CD8-positive, alpha-beta T cell (primary cell): ENCODE measurements at regions of chr3 and their contacts with region 1.

Region 1: DNA sequence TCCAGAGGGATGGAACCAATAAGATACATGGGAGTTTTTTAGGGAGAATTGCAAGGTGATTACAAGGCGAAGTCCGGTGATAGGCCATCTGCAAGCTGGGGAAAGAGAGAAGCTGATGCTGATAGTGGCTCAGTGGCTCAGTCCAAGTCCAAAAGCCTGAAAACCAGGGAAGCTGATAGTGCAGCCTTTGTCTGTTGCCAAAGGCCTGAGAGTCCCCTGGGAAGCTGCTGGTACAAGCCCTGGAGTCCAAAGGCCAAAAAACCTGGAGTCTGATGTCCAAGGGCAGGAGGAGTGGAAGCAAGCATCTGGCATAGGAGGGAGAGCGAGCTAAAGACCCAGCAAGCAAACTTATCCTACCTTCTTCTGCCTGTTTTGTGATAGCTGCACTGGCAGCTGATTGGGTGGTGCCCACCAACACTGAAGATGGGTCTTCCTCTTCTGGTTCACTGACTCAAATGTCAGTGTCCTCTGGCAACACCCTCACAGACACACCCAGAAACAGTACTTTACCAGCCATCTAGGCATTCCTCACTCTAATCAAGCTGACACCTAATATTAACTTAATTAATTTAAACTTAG is 16.7 kb downstream of the TFG start:
- DNase-seq: no peak
- ATAC-seq: no peak
- H3K4me3 ChIP-seq: no peak overlapping the region
- H3K4me3 Mint-ChIP-seq: no peak overlapping the region
- H3K27ac ChIP-seq: no peak overlapping the region
- H3K27ac Mint-ChIP-seq: no peak overlapping the region
- H3K4me1 ChIP-seq: no peaks in the 10 kb centered on the region
- H3K4me1 Mint-ChIP-seq: peaks cover 15% of the 10 kb centered on the region
- H3K27me3 ChIP-seq: no peaks in the 10 kb centered on the region
- H3K27me3 Mint-ChIP-seq: no peaks in the 10 kb centered on the region
- CTCF ChIP-seq: no peak

Region 2: DNA sequence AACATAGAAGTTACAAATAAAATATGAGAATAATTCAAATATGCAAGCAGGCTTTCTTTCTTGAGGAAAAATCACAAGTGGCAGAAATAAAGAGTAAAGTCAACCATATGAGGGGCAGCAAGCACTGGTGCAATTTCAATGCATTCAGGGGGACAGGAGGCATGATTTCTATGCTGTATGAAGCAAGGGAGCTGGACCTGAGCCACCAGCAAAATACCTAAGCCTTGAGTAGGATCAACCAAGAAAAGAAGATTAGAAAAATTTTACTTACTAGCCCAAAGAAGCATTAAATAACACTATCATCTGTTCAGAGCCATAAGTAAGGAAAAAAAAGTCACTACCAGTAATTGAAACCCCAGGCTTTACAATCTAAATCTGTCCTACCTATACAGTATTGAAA is 110.3 kb before region 1 on chr3:
- CTCF ChIA-PET with region 1: no interaction called
- POLR2A ChIA-PET with region 1: no interaction called
- intact Hi-C with region 1: loop called in 1 of 2 experiments (anchors 1 kb)
- DNase-seq: no peak
- ATAC-seq: no peak
- H3K4me3 ChIP-seq: no peak overlapping the region
- H3K4me3 Mint-ChIP-seq: no peak overlapping the region
- H3K27ac ChIP-seq: no peak overlapping the region
- H3K27ac Mint-ChIP-seq: no peak overlapping the region
- H3K4me1 ChIP-seq: no peaks in the 10 kb centered on the region
- H3K4me1 Mint-ChIP-seq: no peaks in the 10 kb centered on the region
- H3K27me3 ChIP-seq: peaks cover 0 to 3% of the 10 kb centered on the region in 2 experiments
- H3K27me3 Mint-ChIP-seq: peaks cover 11% of the 10 kb centered on the region
- CTCF ChIP-seq: no peak